ENCODE measurements at regions of chr10 and their contacts with region 1.

Region 1: GRCh38 chr10:50375051-50375452 is 123.7 kb upstream of the ASAH2 start:
- DNase-seq: no peak
- H3K4me3 ChIP-seq: no peak overlapping the region
- H3K27ac ChIP-seq: peak overlapping the region in 1 of 2 donors; percentile 1
- H3K4me1 ChIP-seq: no peaks in the 10 kb centered on the region
- H3K27me3 ChIP-seq: no peaks in the 10 kb centered on the region
- CTCF ChIP-seq: no peak
- POLR2A ChIP-seq: no peak

Region 2: GRCh38 chr10:50417886-50418830 is 43.1 kb after region 1 on chr10:
- intact Hi-C with region 1: loop called (anchors 2 kb)
- DNase-seq: peak in 1 of 2 donors; percentile 56
- H3K4me3 ChIP-seq: peak overlapping the region; percentile 75 to 92 (median 77)
- H3K27ac ChIP-seq: peak overlapping the region; percentile 83 to 85
- H3K4me1 ChIP-seq: peaks cover 0 to 6% of the 10 kb centered on the region in 2 donors
- H3K27me3 ChIP-seq: no peaks in the 10 kb centered on the region
- CTCF ChIP-seq: no peak
- POLR2A ChIP-seq: no peak

Measured in breast epithelium (tissue), 4 donors.